Activated CD4-positive, alpha-beta T cell treated with anti-CD3 and anti-CD28 coated beads for 36 hours (primary cell): ENCODE measurements at regions of chr11 and their contacts with region 1.

Region 1: DNA sequence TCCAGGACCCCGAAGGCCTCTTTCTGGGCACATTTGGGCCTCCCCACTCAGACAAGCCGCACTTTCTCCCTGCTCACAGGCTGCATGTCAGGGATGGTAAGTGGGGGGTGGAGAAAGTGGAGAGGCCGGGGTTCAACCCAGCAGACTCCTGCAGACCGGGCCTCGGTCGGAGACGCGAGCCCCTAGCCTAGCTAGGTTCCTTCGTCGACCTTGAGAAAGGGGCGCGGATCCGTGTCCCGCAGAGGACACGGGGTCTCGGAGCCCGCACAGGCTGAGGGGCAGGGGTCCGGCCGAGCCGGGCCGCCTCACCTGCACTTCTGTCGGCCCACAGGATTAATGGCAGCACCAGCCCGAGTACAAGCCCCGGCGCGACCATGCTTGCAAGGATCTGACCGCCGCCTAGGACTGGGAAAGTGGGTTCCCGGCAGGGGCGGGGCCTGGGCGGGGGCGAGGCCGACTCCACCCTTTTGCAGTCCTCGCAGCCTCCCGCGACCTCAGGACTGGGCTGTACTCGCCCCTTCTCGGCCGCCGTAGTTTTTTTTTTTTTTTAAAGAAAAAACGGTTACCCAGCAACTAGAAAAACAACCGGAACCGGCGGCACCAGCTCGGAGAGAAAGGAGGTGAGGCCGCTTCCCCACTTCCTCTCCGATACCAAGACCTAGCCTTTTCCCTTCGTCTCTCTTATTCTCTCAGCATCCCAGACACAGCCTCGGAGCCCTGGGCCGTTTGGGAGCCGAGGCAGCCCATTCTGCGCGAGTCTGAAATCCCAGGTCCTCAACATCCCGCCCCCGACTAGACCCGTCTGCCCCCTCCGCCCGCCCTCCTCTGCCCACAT is at the starts of genes SIAE and SPA17:
- DNase-seq: peak; percentile 94
- ATAC-seq: peak; percentile 90
- H3K4me3 Mint-ChIP-seq: peak within 1 kb of the TSS; percentile 84
- H3K27ac Mint-ChIP-seq: peak within 1 kb of the TSS; percentile 86
- H3K4me1 Mint-ChIP-seq: peaks cover 30% of the 10 kb centered on the region
- H3K27me3 Mint-ChIP-seq: no peaks in the 10 kb centered on the region
- total RNA-seq, gene SIAE: 9.4 to 12.2 TPM
- total RNA-seq, gene SPA17: 3.9 to 4.7 TPM

Region 2: DNA sequence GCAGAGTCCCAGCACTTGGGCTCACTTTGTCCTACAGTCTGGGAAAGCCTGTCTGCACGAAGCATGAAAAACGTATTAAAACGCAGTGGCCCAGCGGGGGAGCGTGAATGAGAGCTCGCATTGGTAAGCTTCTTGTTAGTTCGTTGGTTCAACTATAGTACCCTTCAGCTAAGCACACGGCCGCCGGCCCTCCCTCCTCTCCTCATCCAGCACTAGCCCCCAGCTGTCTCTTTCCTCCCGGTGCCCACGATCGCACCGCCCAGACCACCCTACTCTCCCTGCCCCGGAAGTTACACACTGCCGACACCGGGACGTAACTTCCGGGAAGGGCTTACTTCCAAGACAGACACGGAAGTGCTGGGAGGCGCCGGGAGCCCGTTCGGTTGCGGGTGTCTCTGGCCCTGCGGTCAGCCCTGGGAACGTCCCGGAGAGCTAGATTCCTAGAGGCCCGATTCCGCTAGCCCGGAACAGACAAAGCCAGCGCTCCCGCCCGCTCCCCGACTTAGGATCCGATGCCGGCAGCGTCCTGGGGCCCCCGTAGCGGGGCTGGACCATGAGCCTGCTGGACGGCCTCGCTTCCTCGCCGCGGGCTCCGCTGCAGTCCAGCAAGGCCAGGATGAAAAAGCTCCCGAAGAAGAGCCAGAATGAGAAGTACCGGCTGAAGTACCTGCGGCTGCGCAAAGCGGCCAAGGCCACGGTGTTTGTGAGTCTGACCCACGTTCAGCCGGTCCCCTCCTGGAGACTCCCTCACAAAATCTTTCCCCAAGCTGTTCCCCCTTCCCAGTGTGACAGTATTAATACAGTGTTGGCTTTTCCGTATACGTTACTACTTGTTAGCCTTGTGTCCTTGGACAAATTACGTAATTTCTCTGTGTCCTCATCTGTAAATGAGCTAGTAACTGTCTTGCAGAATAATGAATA is 50.8 kb before region 1 on chr11 and contains the start of gene TBRG1:
- CTCF ChIA-PET with region 1: interaction called, 7 read pairs
- POLR2A ChIA-PET with region 1: no interaction called
- intact Hi-C with region 1: loop called (anchors 1 kb)
- DNase-seq: peak; percentile 87
- ATAC-seq: peak; percentile 99
- H3K4me3 Mint-ChIP-seq: peak within 1 kb of the TSS; percentile 93
- H3K27ac Mint-ChIP-seq: peak within 1 kb of the TSS; percentile 95
- H3K4me1 Mint-ChIP-seq: peaks cover 22% of the 10 kb centered on the region
- H3K27me3 Mint-ChIP-seq: peaks cover 5% of the 10 kb centered on the region
- total RNA-seq, gene TBRG1: 29.6 to 40.6 TPM

Region 3: DNA sequence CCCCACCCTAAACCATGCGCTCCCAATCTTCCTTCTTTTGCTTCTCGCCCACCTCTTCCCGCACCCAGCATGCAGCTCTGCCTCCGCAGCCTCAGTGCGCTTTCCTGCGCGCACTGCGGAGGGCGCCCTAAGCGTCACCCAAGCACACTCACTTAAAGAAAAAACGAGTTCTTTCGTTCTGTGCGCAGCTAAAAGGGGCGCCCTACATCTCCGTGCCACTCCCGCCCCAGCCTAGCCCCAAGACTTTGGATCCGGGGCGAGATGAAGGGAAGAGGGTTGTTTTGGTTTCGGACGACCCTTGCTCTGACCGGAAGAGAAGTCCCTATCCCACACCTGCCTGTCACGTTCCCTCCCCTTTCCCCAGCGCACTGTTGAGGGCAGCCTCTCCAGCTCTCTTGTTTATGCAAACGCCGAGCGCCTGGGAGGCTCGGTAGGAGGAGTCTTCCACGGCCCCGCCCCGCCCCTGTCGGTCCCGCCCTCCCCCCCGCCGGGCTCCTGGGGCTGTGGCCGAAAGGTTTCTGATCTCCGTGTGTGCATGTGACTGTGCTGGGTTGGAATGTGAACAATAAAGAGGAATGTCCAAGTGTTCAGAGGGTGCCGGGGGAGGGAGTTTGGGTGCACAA is 73.2 kb after region 1 on chr11:
- CTCF ChIA-PET with region 1: interaction called, 12 read pairs
- POLR2A ChIA-PET with region 1: no interaction called
- intact Hi-C with region 1: loop called (anchors 1 to 2 kb)
- DNase-seq: peak; percentile 88
- ATAC-seq: peak; percentile 92
- H3K4me3 Mint-ChIP-seq: peak overlapping the region; percentile 81
- H3K27ac Mint-ChIP-seq: peak overlapping the region; percentile 90
- H3K4me1 Mint-ChIP-seq: peaks cover 11% of the 10 kb centered on the region
- H3K27me3 Mint-ChIP-seq: peaks cover 2% of the 10 kb centered on the region

Region 4: GRCh38 chr11:124800226-124800929 is 126.8 kb after region 1 on chr11 and contains the start of gene MSANTD2:
- CTCF ChIA-PET with region 1: interaction called, 29 read pairs
- POLR2A ChIA-PET with region 1: interaction called, 4 read pairs
- intact Hi-C with region 1: loop called (anchors 1 to 2 kb)
- DNase-seq: peak; percentile 88
- ATAC-seq: peak; percentile 89
- H3K4me3 Mint-ChIP-seq: peak within 1 kb of the TSS; percentile 83
- H3K27ac Mint-ChIP-seq: peak within 1 kb of the TSS; percentile 95
- H3K4me1 Mint-ChIP-seq: peaks cover 36% of the 10 kb centered on the region
- H3K27me3 Mint-ChIP-seq: no peaks in the 10 kb centered on the region
- total RNA-seq, gene MSANTD2: 6.9 to 8.6 TPM

Region 5: GRCh38 chr11:124875943-124876817 is 202.6 kb after region 1 on chr11:
- CTCF ChIA-PET with region 1: interaction called, 10 read pairs
- POLR2A ChIA-PET with region 1: no interaction called
- intact Hi-C with region 1: loop called in 1 of 2 experiments (anchors 1 kb)
- DNase-seq: peak; percentile 88
- ATAC-seq: peak; percentile 98
- H3K4me3 Mint-ChIP-seq: peak overlapping the region; percentile 77
- H3K27ac Mint-ChIP-seq: peak overlapping the region; percentile 58
- H3K4me1 Mint-ChIP-seq: peaks cover 16% of the 10 kb centered on the region
- H3K27me3 Mint-ChIP-seq: peaks cover 27% of the 10 kb centered on the region

Region 6: GRCh38 chr11:125164422-125165110 is 491.0 kb after region 1 on chr11 and contains the start of gene PKNOX2:
- CTCF ChIA-PET with region 1: no interaction called
- POLR2A ChIA-PET with region 1: no interaction called
- intact Hi-C with region 1: loop called in 1 of 2 experiments (anchors 5 kb)
- DNase-seq: peak; percentile 83
- ATAC-seq: peak; percentile 85
- H3K4me3 Mint-ChIP-seq: peak within 1 kb of the TSS; percentile 77
- H3K27ac Mint-ChIP-seq: peak within 1 kb of the TSS; percentile 51
- H3K4me1 Mint-ChIP-seq: peaks cover 18% of the 10 kb centered on the region
- H3K27me3 Mint-ChIP-seq: peaks cover 53% of the 10 kb centered on the region
- total RNA-seq, gene PKNOX2: not detected